ENCODE measurements at regions of chr21 and their contacts with region 1.

Region 1: DNA sequence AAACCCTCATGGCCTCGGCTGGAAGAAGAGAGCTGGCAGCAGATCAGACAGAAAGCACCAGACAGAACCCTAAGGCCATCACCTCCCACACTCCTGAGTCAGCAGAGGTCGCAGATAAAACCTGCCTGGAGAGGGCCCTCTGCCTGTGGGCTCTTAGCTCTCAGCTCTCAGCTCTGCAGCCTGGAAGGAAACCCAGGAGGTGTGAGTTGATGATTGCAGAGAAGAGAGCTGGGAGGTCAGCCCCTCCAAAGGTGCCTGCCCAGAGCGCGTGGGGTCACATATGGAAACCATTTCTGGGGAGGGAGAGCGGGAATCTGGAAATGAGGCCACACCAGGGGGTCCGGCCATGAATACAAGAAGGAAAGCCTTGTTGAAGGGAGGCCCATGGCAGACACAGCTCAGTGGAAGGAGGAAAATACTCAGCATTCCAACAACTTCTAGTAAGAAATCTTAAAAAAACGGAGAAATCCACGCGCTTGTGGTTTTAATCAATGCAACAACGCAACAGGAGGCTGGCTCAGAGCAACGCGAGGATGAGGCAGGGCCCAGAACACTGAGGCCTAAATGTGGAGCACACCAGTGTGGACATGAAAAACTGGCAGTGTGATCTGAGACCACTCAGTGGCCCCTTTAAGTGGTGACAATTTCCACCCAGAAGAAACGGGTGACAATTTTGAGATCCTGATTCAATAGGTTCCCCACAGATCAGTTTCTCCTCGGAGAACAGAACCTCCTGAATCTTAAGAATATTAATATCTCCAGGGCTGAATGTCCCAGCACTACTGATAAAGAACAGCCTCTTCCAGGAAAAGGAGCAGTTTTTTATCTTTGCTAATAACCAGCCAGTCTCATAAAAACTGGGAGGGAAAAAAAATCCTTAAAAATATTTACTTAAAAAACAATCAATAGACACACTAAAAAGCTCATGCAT is 45.7 kb downstream of the PSMG1 start:
- DNase-seq: no peak
- H3K4me3 ChIP-seq: no peak overlapping the region
- H3K27ac ChIP-seq: no peak overlapping the region
- H3K4me1 ChIP-seq: no peaks in the 10 kb centered on the region
- H3K27me3 ChIP-seq: no peaks in the 10 kb centered on the region
- CTCF ChIP-seq: no peak

Region 2: DNA sequence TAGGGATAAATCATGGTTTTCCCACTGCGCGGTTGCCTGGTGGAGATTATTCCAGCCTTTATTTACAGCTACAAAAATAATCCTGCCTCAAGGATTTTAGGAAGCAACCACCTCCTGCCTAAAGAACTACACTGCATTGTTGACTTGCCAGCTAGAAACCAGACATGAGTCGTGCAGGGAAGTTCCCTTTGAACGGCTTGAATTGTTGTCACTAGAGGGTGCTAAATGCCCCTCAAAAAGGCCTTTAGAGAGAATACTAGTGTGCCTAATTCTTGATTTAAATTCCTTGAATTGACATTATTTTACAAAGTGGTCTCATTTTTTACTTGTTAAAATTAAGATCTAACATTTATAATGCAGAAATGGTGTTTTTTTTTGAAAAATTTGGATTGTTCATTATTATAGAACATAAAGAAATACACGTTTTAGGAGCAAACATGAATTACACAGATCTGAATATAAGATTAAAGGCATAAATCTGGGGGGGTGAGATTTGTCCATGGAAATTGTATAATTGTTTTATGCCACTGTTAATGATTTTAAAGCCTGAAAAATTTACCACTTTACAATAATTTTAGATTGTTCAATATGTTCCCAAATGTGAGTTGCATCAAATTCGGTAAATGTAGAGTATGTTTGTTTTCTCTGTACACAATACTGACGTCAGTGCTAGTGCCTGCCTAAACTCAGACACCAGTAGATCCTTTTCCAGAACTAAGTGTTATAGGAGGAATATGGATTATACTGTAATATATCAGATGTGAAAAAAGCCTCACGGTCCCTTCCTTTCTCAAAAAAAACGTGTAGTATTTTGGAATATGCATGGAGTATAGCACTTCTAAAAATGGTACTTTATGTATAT is 631.6 kb before region 1 on chr21:
- CTCF ChIA-PET with region 1: no interaction called
- POLR2A ChIA-PET with region 1: no interaction called
- intact Hi-C with region 1: loop called (anchors 1 kb)
- DNase-seq: peak in 1 of 2 experiments; percentile 12
- H3K4me3 ChIP-seq: no peak overlapping the region
- H3K27ac ChIP-seq: no peak overlapping the region
- H3K4me1 ChIP-seq: no peaks in the 10 kb centered on the region
- H3K27me3 ChIP-seq: peaks cover 16% of the 10 kb centered on the region; the same call in 1 of the 2 replicates
- CTCF ChIP-seq: peak; percentile 63

Region 3: GRCh38 chr21:38619992-38620479 is 517.5 kb before region 1 on chr21:
- CTCF ChIA-PET with region 1: no interaction called
- POLR2A ChIA-PET with region 1: no interaction called
- intact Hi-C with region 1: loop called (anchors 5 kb)
- DNase-seq: no peak
- H3K4me3 ChIP-seq: no peak overlapping the region
- H3K27ac ChIP-seq: no peak overlapping the region
- H3K4me1 ChIP-seq: no peaks in the 10 kb centered on the region
- H3K27me3 ChIP-seq: peaks cover 19% of the 10 kb centered on the region; the same call in 1 of the 2 replicates
- CTCF ChIP-seq: no peak

Region 4: GRCh38 chr21:38733973-38734546 is 403.5 kb before region 1 on chr21:
- CTCF ChIA-PET with region 1: no interaction called
- POLR2A ChIA-PET with region 1: interaction called, 3 read pairs
- intact Hi-C with region 1: loop called (anchors 1 kb)
- DNase-seq: peak; percentile 44 to 81
- H3K4me3 ChIP-seq: no peak overlapping the region
- H3K27ac ChIP-seq: no peak overlapping the region
- H3K4me1 ChIP-seq: no peaks in the 10 kb centered on the region
- H3K27me3 ChIP-seq: no peaks in the 10 kb centered on the region
- CTCF ChIP-seq: peak; percentile 89

Region 5: GRCh38 chr21:39114871-39115575 is 22.5 kb before region 1 on chr21:
- CTCF ChIA-PET with region 1: no interaction called
- POLR2A ChIA-PET with region 1: no interaction called
- intact Hi-C with region 1: no loop called
- DNase-seq: peak in 1 of 2 experiments; percentile 3
- H3K4me3 ChIP-seq: no peak overlapping the region
- H3K27ac ChIP-seq: no peak overlapping the region
- H3K4me1 ChIP-seq: no peaks in the 10 kb centered on the region
- H3K27me3 ChIP-seq: no peaks in the 10 kb centered on the region
- CTCF ChIP-seq: no peak

Region 6: DNA sequence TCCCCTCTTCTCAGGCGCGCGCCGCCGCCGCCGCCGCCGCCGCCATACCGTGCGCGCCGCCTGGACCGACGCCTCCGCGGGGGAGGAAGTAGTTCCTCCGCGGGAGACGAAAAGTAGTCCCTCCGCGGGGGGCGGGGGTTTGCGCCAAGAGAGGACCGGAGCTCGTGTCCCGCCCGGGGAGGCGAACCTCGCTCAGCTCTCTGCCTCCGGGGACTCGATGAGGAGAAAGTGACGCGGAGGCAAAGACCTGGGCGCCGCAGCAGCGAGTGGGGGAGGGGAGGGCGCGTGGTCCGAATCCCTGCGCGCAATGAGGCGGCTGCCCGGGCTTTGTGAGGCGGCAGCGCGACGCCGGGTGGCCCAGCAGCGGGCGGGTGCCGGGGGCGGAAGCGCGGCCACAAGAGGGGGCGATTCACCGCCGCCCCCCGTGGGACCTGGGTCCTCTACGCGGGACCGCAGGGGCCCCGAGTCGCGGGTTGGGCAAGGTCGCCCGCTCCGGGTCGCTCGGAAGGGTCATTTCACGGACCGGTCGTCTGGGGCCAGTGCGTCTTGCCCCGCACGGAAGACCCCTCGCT is 176.1 kb after region 1 on chr21 and contains the start of gene BRWD1:
- CTCF ChIA-PET with region 1: no interaction called
- POLR2A ChIA-PET with region 1: no interaction called
- intact Hi-C with region 1: no loop called
- DNase-seq: peak; percentile 52 to 67
- H3K4me3 ChIP-seq: peak within 1 kb of the TSS; percentile 81
- H3K27ac ChIP-seq: peak within 1 kb of the TSS; percentile 85
- H3K4me1 ChIP-seq: peaks cover 22% of the 10 kb centered on the region
- H3K27me3 ChIP-seq: no peaks in the 10 kb centered on the region
- CTCF ChIP-seq: no peak; the same call in 1 of the 2 replicates
- total RNA-seq, gene BRWD1: 38.9 and 42.9 TPM in 2 replicates